Cardiac septum (tissue), 1 donor: ENCODE measurements at regions of chr1 and their contacts with region 1.

Region 1: GRCh38 chr1:48677306-48678287 is 99.1 kb downstream of the BEND5 start:
- DNase-seq: no peak

Region 2: DNA sequence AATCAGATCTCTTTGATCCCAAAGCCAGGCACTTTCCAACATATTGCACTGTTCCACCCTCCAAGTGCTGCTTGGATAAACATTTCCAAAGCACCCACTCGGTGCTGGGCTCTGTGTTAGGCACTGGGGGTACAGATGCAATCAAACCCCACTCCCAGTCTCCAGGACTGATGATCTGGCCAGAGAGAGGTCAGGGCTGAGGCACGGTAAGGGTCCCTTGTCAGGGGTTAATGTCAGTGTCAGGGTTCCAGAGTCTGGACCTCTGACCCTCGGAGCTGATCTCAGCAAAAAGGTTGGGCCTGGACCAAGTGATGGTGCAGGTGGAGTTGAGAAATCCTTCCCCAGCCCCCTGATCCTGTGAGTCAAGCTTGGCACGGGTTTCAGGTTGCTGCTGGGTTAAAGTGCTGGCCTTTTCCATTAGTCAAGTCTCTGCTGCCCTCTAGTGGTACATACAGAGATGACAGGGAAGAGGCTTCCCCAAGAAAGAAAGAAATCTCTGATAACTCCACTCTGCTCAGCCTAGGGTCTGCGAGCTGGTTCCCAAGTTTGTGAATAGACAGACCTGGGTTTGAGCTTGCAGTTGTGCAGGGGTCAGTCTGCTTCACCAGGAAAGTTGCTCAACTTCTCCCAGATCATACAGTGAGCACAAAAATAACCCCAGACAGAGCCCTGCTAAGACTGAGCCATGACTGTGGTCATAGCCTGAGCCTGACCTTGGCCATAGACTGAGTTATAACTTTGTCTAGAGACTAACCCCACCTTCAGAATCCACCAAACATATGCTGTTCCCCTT is 1671.0 kb after region 1 on chr1:
- intact Hi-C with region 1: loop called (anchors 10 kb)
- DNase-seq: no peak